ENCODE measurements at regions of chr9 and their contacts with region 1.

Region 1: DNA sequence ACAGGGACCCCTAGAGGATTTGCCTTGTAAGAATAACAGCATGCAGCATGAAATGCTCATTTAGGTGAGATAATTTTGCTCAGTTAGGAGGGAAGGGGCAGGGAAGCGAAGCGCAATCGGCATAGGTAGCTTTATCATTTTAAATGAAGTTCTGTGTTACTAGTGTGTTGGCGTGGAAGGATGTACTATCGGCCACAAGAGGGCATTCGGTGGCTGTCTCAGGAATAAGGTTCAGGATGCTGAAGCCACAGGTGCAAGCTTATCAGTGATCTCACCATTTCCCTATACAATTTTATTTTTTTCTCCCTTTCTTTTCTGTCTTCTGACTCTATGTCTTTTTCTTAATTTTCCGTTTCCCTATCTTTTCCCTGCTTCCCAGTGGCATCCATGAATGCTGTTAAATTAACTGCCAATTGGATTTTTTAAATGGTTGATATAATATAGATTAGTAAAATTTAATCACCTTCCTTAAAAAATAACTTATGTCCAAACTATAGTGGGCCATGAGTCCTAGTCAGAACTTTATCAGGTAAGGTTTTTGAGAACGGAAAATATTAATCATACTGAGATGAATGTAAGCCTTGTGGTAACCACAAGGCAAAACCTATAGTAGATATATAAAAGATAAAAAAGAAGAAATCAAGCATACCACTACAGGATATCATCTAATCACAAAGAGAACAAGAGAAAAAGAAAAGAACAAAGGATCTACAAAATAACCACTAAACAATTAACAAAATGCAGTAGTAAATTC is 1.2 kb upstream of the INSL6 start:
- DNase-seq: peak; percentile 46
- H3K4me3 ChIP-seq: no peak overlapping the region
- H3K27ac ChIP-seq: no peak overlapping the region
- H3K4me1 ChIP-seq: no peaks in the 10 kb centered on the region
- H3K27me3 ChIP-seq: no peaks in the 10 kb centered on the region
- CTCF ChIP-seq: peak; percentile 53 to 78 (median 67)
- EP300 ChIP-seq: no peak
- POLR2A ChIP-seq: no peak

Region 2: GRCh38 chr9:5278486-5278885 is 91.9 kb after region 1 on chr9:
- in situ Hi-C with region 1: loop called in 1 of 4 experiments (anchors 25 kb)
- intact Hi-C with region 1: no loop called
- DNase-seq: no peak
- H3K4me3 ChIP-seq: no peak overlapping the region
- H3K27ac ChIP-seq: no peak overlapping the region
- H3K4me1 ChIP-seq: no peaks in the 10 kb centered on the region
- H3K27me3 ChIP-seq: no peaks in the 10 kb centered on the region
- CTCF ChIP-seq: no peak
- EP300 ChIP-seq: no peak
- POLR2A ChIP-seq: no peak

Region 3: DNA sequence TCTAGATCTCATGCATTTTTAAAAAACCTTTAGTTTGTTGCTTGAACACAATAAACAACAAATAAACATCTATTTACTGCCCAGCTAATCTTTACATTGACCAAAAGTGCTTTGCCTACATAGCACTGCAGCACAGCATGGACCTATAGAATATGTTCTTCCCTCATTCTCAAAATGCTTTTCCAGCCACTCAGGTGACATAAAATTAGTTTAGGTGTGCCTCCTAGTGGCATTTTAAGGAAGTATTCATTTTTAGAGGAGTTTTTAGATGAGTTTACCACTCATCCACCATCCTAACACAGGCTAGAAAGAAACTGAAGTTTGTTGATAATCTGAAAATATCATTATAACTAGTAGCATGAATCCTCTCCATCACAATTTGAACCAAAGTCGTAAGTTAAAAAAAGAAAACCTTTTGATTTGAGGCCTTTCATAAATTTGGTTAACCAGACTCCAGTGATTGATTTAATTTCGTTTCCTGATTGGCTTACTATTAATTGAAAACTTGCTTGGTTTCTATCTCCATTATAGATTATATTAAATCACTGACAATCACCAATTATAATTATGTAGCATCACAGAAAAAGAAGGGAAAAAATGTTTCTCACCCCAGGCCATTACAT is 238.5 kb after region 1 on chr9:
- in situ Hi-C with region 1: loop called in 3 of 4 experiments (anchors 10 to 25 kb)
- intact Hi-C with region 1: no loop called
- DNase-seq: no peak
- H3K4me3 ChIP-seq: no peak overlapping the region
- H3K27ac ChIP-seq: no peak overlapping the region
- H3K4me1 ChIP-seq: peaks cover 0 to 3% (median 0%) of the 10 kb centered on the region in 4 donors
- H3K27me3 ChIP-seq: no peaks in the 10 kb centered on the region
- CTCF ChIP-seq: peak; percentile 30 to 53 (median 40)
- EP300 ChIP-seq: no peak
- POLR2A ChIP-seq: no peak

Region 4: DNA sequence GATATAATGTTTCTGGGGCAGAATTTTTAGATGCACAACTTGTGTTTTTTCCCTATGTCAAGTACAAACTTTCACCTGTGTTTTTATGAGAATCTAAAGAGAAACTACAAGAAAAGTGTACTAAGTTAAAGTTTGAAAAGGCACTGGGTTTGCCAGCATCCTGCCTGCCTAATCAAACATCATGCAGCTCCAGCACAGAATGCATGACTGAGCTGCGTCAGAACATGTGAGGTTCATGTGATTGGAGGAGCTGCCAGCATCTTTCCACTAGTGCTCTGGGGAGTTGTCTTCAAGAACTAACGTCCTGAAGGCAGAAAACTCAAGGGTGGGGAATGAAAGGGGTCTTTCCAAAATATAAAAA is 396.2 kb after region 1 on chr9:
- in situ Hi-C with region 1: loop called in 1 of 4 experiments (anchors 25 kb)
- intact Hi-C with region 1: no loop called
- DNase-seq: no peak
- H3K4me3 ChIP-seq: no peak overlapping the region
- H3K27ac ChIP-seq: no peak overlapping the region
- H3K4me1 ChIP-seq: no peaks in the 10 kb centered on the region
- H3K27me3 ChIP-seq: no peaks in the 10 kb centered on the region
- CTCF ChIP-seq: no peak
- EP300 ChIP-seq: no peak
- POLR2A ChIP-seq: no peak